Esophagus squamous epithelium (tissue), 5 donors: ENCODE measurements at regions of chr3 and their contacts with region 1.

Region 1: DNA sequence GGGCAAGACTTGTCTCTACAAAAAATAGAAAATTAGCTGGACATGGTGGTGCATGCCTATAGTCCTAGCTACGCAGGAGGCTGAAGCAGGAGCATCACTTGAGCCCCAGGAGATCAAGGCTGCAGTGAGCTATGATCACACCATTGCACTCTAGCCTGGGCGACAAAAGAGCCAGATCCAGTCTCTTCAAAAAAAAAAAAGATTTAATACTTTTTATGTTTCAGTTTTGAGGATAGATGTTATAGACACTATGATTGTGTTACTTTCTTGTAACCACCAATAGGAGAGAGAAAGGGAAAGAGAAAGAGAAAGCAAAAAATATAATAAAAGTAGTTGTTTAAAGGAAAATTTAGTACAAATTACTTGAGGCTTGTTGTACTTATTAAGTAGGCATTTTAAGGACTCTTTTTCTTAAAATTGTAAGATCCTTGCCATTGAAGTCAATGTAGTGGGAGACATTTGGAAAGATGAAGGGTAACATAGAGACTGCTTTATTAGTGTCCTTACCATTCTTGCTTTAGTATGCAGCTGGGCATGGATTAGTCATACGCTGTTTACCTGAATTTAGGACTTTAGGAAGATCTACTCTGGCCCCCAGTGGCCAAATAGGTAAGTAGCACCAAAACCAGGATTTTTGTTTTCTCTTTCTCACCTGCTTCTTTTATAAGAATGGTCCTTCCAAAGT is 35.1 kb upstream of the ZDHHC23 start:
- DNase-seq: no peak
- H3K4me3 ChIP-seq: no peak overlapping the region
- H3K27ac ChIP-seq: peak overlapping the region in 1 of 4 donors; percentile 36
- H3K4me1 ChIP-seq: peaks cover 0 to 9% (median 0%) of the 10 kb centered on the region in 3 donors
- H3K27me3 ChIP-seq: no peaks in the 10 kb centered on the region
- CTCF ChIP-seq: peak; percentile 35 to 86 (median 74)
- POLR2A ChIP-seq: no peak

Region 2: DNA sequence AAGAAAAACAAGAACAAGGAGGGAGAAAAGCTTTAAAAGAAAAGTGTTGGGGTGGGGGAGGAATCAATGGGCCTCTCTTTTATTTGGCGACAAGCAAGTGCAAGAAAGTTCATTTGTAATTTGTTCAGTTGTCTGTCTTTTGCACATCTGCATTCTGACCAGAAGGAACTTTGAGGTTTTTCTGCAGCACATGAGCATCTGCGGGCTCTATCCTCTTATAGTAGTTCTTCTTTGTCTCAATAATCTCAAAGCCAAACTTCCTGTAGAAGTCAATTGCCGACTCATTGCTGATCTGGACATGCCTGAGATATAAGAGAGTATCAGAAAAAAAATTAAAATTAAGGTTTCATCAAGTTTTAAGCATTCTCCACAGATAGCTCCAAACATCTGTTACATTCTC is 191.1 kb before region 1 on chr3:
- intact Hi-C with region 1: loop called (anchors 10 kb)
- DNase-seq: no peak
- H3K4me3 ChIP-seq: no peak overlapping the region
- H3K27ac ChIP-seq: no peak overlapping the region
- H3K4me1 ChIP-seq: peaks cover 0 to 7% (median 0%) of the 10 kb centered on the region in 3 donors
- H3K27me3 ChIP-seq: no peaks in the 10 kb centered on the region
- CTCF ChIP-seq: no peak
- POLR2A ChIP-seq: no peak

Region 3: DNA sequence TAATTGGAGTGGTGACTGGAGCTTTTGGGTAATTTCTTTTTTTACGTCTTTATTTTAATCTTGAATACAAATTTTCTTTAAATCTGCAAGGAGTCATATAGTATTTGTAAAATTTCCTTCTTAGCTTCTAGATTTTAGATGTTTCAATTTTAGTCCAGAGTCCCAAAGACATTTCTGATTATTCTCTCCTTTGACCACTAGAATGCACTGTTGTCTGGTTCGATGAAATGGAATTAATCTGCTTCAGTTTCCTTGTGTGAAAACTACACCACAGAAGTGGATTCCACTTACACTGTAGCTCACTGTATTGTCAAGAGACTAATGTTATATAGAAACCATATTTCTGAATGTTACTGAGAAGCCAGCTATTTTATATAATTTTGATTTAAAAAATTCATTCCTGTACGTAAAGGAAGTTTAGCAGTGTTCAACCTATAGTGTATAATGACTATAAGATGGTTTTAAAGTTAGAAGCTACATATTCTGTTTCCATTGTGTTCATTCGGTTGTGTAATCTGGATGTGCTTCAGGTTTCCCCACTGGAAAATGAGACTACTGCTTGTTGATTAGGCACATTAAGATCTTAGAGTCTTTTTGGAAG is 68.0 kb before region 1 on chr3:
- intact Hi-C with region 1: loop called (anchors 5 kb)
- DNase-seq: no peak
- H3K4me3 ChIP-seq: no peak overlapping the region
- H3K27ac ChIP-seq: no peak overlapping the region
- H3K4me1 ChIP-seq: peaks cover 0 to 11% (median 0%) of the 10 kb centered on the region in 3 donors
- H3K27me3 ChIP-seq: no peaks in the 10 kb centered on the region
- CTCF ChIP-seq: peak in 5 of 6 experiments; percentile 47 to 71 (median 51)
- POLR2A ChIP-seq: no peak

Region 4: GRCh38 chr3:114274929-114275328 is 362.2 kb after region 1 on chr3:
- intact Hi-C with region 1: no loop called
- DNase-seq: no peak
- H3K4me3 ChIP-seq: no peak overlapping the region
- H3K27ac ChIP-seq: no peak overlapping the region
- H3K4me1 ChIP-seq: no peaks in the 10 kb centered on the region
- H3K27me3 ChIP-seq: no peaks in the 10 kb centered on the region
- CTCF ChIP-seq: no peak
- POLR2A ChIP-seq: no peak